ENCODE measurements at regions of chr13 and their contacts with region 1.

Region 1: DNA sequence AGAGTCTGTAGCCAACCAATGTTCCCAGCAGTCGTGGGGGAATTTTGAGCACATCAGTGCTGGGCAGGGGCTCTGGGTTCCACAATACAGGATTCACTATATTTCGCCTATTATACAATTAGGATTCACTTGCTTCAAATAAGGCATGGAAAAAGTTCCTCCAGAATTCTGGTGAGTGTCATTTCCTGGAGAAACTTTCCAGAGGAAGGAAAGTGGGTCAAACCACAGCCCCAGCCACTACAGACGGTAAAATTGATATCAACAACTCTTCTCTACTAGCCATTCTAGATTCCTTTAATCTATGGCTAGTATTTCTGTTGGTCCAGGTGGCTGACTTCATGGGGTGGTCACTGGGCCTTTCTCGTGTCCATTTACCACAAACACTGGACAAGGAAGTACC is 10.5 kb downstream of the MYCBP2 start:
- DNase-seq: peak; percentile 90
- H3K4me3 ChIP-seq: no peak overlapping the region
- H3K27ac ChIP-seq: peak overlapping the region; percentile 66
- H3K4me1 ChIP-seq: peaks cover 15% of the 10 kb centered on the region
- H3K27me3 ChIP-seq: no peaks in the 10 kb centered on the region
- CTCF ChIP-seq: no peak
- POLR2A ChIP-seq: no peak

Region 2: GRCh38 chr13:77305276-77305675 is 11.2 kb before region 1 on chr13:
- CTCF ChIA-PET with region 1: interaction called, 5 read pairs
- POLR2A ChIA-PET with region 1: no interaction called
- dilution Hi-C with region 1: no loop called
- intact Hi-C with region 1: loop called (anchors 1 kb)
- DNase-seq: peak; percentile 87
- H3K4me3 ChIP-seq: no peak overlapping the region
- H3K27ac ChIP-seq: peak overlapping the region; percentile 82
- H3K4me1 ChIP-seq: peaks cover 42% of the 10 kb centered on the region
- H3K27me3 ChIP-seq: no peaks in the 10 kb centered on the region
- CTCF ChIP-seq: no peak
- POLR2A ChIP-seq: no peak